Heart left ventricle (tissue), 16 donors: ENCODE measurements at regions of chr19 and their contacts with region 1.

Region 1: GRCh38 chr19:2610637-2611482 is 91.6 kb downstream of the GNG7 start:
- DNase-seq: peak; percentile 91 to 97 (median 94)
- ATAC-seq: peak; percentile 87 to 95 (median 92)
- H3K4me3 ChIP-seq: peak overlapping the region in 11 of 12 donors; percentile 28 to 59 (median 52)
- H3K27ac ChIP-seq: peak overlapping the region; percentile 73 to 90 (median 82)
- H3K4me1 ChIP-seq: peaks cover 0 to 32% (median 11%) of the 10 kb centered on the region in 12 donors
- H3K27me3 ChIP-seq: no peaks in the 10 kb centered on the region
- CTCF ChIP-seq: peak; percentile 96 to 100 (median 98)
- POLR2A ChIP-seq: peak in 1 of 2 donors; percentile 61

Region 2: DNA sequence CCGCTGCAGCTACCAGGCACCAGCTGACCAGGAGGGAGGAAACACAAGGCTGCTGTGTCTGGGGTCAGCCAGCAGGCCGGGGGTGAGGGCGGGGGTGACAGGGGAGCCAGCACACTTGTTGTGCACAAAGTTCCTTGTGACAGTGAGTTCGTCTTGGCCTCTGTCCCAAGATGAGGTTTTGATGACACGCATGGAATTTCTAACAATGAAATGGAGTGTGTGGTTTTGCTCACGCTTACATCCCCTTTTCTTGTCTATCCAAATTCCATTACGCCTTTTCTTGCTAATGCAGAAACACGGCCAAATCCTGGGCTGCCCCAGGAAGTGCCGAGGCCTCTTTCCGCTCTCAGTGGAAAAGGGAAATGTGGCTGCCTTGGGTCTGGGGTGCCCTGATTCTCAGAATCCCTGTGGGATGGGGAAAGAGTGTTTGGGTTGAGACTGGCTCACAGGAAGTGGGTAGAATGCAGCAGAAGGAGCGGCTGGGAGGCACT is 61.1 kb before region 1 on chr19:
- intact Hi-C with region 1: loop called in 1 of 10 experiments (anchors 1 kb)
- DNase-seq: peak; percentile 80 to 88 (median 84)
- ATAC-seq: peak; percentile 24 to 58 (median 47)
- H3K4me3 ChIP-seq: no peak overlapping the region
- H3K27ac ChIP-seq: peak overlapping the region in 11 of 12 donors; percentile 13 to 91 (median 63)
- H3K4me1 ChIP-seq: peaks cover 15 to 69% (median 36%) of the 10 kb centered on the region in 12 donors
- H3K27me3 ChIP-seq: no peaks in the 10 kb centered on the region
- CTCF ChIP-seq: no peak
- POLR2A ChIP-seq: no peak